ENCODE measurements at regions of chr10 and their contacts with region 1.

Region 1: GRCh38 chr10:11270135-11270857 is 252.6 kb downstream of the CELF2 start:
- DNase-seq: peak in 1 of 2 donors; percentile 81
- H3K4me3 ChIP-seq: no peak overlapping the region
- H3K27ac ChIP-seq: no peak overlapping the region
- H3K4me1 ChIP-seq: peaks cover 0 to 4% of the 10 kb centered on the region in 2 donors
- H3K27me3 ChIP-seq: no peaks in the 10 kb centered on the region
- CTCF ChIP-seq: peak; percentile 82 to 93 (median 90)

Region 2: DNA sequence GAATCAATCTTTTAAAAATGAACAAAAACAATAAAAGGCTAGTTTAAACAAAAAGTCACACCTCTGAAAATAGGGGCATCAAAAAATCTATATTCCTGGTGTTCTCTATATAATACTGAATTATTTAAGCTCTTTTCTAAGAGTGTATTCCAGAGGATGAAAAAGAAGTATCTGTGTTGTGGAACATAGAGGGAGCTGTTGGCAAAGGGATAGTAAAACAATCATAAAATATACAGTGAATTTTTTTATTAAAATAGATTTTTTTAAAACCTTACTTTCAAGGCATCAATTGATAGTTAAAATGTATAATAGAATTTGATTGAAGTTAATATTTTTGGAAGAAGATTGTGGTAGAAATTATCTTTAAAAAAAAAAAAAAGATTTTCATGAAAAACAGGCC is 1661.7 kb before region 1 on chr10:
- intact Hi-C with region 1: loop called (anchors 10 kb)
- DNase-seq: no peak
- H3K4me3 ChIP-seq: no peak overlapping the region
- H3K27ac ChIP-seq: no peak overlapping the region
- H3K4me1 ChIP-seq: no peaks in the 10 kb centered on the region
- H3K27me3 ChIP-seq: no peaks in the 10 kb centered on the region
- CTCF ChIP-seq: peak in 1 of 3 experiments; percentile 12